ENCODE measurements at regions of chr20 and their contacts with region 1.

Region 1: GRCh38 chr20:2470423-2471193 is at the start of gene SNRPB:
- DNase-seq: peak; percentile 99
- H3K4me3 ChIP-seq: peak within 1 kb of the TSS; percentile 99
- H3K27ac ChIP-seq: peak within 1 kb of the TSS; percentile 87
- H3K4me1 ChIP-seq: peaks cover 31% of the 10 kb centered on the region
- CTCF ChIP-seq: no peak
- total RNA-seq, gene SNRPB: 429 and 516 TPM in 2 replicates

Region 2: GRCh38 chr20:2508631-2509467 is 38.2 kb after region 1 on chr20 and contains the start of gene ZNF343:
- CTCF ChIA-PET with region 1: no interaction called
- POLR2A ChIA-PET with region 1: interaction called, 3 read pairs
- intact Hi-C with region 1: loop called (anchors 1 kb)
- DNase-seq: peak; percentile 88
- H3K4me3 ChIP-seq: peak within 1 kb of the TSS; percentile 87
- H3K27ac ChIP-seq: peak within 1 kb of the TSS; percentile 38
- H3K4me1 ChIP-seq: peaks cover 18% of the 10 kb centered on the region
- CTCF ChIP-seq: no peak
- total RNA-seq, gene ZNF343: 7.1 and 10.1 TPM in 2 replicates

Region 3: DNA sequence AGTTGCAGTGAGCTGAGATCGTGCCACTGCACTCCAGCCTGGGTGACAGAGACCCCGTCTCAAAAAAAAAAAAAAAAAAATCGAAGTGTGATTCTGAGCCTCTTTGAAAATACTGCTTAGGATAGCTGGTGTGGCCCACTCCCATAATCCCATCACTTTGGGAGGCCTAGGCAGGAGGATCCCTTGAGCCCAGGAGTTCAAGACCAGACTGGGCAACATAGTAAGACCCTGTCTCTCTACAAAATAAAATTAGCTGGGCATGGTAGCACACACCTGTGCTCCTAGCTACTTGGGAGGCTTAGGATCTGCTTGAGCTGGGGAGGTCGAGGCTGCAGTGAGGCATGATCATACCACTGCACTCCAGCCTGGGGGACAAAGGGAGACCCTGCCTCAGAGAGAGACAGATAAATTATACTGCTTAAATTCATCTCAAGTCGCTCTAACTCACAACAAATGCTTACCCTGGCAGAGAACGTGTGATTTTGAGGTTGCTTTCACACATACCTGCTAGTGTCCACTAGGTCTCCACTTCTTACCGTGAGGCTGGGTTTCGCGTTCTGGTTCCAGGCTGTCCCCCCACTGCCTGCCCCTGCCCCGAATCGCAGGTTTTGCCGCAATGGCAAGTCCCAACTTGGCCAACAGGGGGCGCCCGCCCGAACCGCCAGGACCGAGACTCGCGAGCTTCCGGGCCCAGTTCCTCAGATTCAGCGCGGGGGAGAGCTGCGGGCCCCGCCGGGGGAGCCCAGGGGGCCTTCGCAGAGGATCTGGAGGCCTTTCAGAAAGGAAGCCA is 53.5 kb after region 1 on chr20:
- CTCF ChIA-PET with region 1: interaction called, 3 read pairs
- POLR2A ChIA-PET with region 1: interaction called, 3 read pairs
- intact Hi-C with region 1: loop called (anchors 5 kb)
- DNase-seq: peak; percentile 84
- H3K4me3 ChIP-seq: peak overlapping the region; percentile 69
- H3K27ac ChIP-seq: no peak overlapping the region
- H3K4me1 ChIP-seq: peaks cover 8% of the 10 kb centered on the region
- CTCF ChIP-seq: peak; percentile 95

Region 4: DNA sequence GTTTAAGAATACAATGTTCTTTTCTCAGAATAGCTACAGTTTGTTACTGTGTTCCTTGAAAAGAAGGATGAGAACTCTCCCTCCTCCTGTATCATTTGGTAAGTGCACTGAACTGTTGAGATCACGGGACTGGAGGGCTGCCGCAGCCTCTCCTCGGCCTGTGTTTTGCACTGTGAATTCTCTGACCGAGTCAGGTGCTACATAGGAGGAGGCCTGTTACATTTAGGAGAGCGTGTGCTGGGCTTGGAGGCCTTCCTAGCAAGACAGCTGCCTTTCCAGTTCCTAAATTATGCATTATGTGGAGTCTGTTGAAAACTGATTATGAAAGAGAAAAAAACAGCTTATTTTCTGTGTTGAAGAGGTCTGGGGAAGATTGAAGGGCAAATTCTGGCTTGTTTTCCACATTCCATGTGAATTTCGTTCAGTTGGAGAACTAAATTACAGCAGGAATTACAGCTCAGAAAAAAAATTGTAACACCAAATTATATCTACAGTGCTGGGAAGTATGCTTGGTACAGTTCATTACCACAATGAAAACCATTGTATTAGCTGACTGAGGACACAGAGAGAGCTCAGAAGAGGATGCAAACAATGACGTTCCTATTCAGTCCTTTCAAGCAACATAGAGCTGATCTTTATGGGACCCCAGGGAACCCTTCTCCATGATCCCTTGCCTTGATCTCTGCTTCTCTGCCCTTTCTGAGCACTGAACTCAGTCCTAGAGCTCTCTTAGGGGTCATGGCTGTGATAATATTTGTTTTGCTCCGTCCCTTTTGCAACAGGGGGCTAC is 68.5 kb after region 1 on chr20:
- CTCF ChIA-PET with region 1: no interaction called
- POLR2A ChIA-PET with region 1: no interaction called
- intact Hi-C with region 1: no loop called
- DNase-seq: no peak
- H3K4me3 ChIP-seq: no peak overlapping the region
- H3K27ac ChIP-seq: no peak overlapping the region
- H3K4me1 ChIP-seq: no peaks in the 10 kb centered on the region
- CTCF ChIP-seq: no peak